ENCODE measurements at regions of chr19 and their contacts with region 1.

Region 1: GRCh38 chr19:12847159-12848139 is 9.1 kb downstream of the MAST1 start:
- DNase-seq: peak; percentile 76
- H3K4me3 ChIP-seq: peak overlapping the region; percentile 22
- H3K27ac ChIP-seq: no peak overlapping the region
- H3K4me1 ChIP-seq: no peaks in the 10 kb centered on the region
- H3K27me3 ChIP-seq: no peaks in the 10 kb centered on the region
- CTCF ChIP-seq: peak; percentile 98

Region 2: GRCh38 chr19:13986348-13986904 is 1139.0 kb after region 1 on chr19:
- CTCF ChIA-PET with region 1: no interaction called
- POLR2A ChIA-PET with region 1: interaction called, 18 read pairs
- intact Hi-C with region 1: no loop called
- DNase-seq: peak; percentile 92
- H3K4me3 ChIP-seq: no peak overlapping the region
- H3K27ac ChIP-seq: peak overlapping the region; percentile 79
- H3K4me1 ChIP-seq: peaks cover 21% of the 10 kb centered on the region
- H3K27me3 ChIP-seq: no peaks in the 10 kb centered on the region
- CTCF ChIP-seq: no peak

Measured in A673 (cell line).